Activated naive CD4-positive, alpha-beta T cell treated with anti-CD3 and anti-CD28 coated beads for 36 hours (primary cell): ENCODE measurements at regions of chr14 and their contacts with region 1.

Region 1: GRCh38 chr14:101876555-101876938 is 87.8 kb upstream of the DYNC1H1 start:
- DNase-seq: peak; percentile 94
- H3K4me3 Mint-ChIP-seq: peak overlapping the region; percentile 52
- H3K27ac Mint-ChIP-seq: peak overlapping the region; percentile 85
- H3K4me1 Mint-ChIP-seq: peaks cover 89% of the 10 kb centered on the region
- H3K27me3 Mint-ChIP-seq: no peaks in the 10 kb centered on the region

Region 2: DNA sequence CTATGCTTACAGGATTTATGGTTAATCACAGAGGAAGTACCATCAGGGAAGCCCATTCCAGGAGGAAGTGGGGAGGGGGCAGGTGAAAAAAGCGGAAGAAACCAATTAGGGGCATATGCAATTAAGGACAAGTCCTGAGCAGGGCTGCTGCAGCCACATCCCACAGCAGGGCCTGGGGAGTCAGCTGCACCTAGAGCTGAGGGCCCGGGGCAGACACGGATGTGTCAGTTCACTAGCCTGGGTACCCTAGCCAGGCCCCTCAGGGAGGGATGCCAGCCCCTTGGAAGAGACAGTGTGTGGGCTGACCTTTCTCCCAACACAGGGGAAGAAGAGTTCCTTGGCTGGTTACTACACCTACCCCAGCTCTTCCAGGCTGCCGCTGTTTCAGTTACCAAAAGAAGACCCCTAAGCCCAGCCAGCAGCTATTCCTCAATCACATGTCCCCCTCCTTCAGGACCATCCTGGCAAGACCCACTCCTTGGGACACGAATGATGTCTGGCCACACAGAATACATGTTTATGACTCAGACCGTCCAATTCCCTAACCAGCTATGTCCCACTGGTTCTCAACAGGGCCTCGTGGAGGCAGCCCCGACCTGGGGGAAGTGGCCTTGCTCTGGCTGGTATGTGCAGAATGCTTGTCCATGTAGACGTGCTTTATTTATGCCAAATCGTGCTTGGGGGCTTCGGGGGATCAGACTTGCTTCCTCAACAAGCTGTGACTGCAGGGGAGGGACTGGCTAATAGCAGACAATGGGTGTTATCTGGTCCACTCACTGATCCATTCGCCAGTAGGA is 839.3 kb before region 1 on chr14:
- CTCF ChIA-PET with region 1: no interaction called
- intact Hi-C with region 1: no loop called
- DNase-seq: no peak
- H3K4me3 Mint-ChIP-seq: no peak overlapping the region
- H3K27ac Mint-ChIP-seq: peak overlapping the region; percentile 51
- H3K4me1 Mint-ChIP-seq: no peaks in the 10 kb centered on the region
- H3K27me3 Mint-ChIP-seq: no peaks in the 10 kb centered on the region

Region 3: GRCh38 chr14:101135796-101136742 is 740.5 kb before region 1 on chr14:
- CTCF ChIA-PET with region 1: no interaction called
- intact Hi-C with region 1: no loop called
- DNase-seq: no peak
- H3K4me3 Mint-ChIP-seq: no peak overlapping the region
- H3K27ac Mint-ChIP-seq: no peak overlapping the region
- H3K4me1 Mint-ChIP-seq: no peaks in the 10 kb centered on the region
- H3K27me3 Mint-ChIP-seq: peaks cover 15% of the 10 kb centered on the region

Region 4: DNA sequence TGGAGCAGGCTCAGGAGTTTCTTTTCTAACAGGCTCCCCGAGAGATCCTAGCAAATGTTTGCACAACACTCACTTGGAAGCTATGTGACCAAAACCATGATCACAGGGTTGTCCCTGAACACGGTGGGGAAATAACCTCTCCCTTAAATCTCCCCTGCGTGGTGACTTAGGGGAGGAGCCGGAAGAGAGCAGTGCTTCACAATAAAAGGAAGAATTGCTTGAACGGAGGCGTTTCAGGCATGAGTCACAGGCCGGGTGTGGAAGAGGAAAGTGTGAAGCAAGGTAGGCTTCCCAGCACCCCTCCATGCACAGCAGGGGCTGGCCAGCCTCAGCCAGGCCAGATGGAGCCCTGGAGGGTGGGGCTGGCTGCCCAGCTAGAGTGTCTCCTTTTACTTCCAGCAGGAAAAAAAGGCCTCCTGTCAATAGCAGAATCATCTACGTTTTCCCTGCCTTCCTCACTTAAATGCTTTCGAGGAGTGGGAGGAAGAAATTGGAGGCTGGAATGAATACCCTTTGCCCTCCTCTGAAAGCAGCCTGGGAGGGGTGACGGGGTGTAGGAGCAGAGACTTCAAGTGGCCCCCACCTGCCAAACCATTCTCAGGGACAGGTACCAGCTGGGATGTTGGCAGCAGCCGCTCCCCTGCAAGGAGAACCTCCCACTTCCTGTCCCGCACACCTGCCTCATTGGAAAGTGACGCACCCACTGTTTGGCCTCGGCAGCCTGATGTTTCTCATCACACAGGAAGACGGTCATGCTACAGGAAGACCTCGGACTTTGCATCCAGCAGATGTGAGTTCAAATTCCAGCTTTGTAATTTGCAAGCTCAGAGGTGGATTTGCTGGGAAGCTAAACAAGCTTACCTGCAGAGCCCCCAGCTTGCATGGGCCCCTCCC is 145.1 kb before region 1 on chr14:
- CTCF ChIA-PET with region 1: no interaction called
- intact Hi-C with region 1: loop called (anchors 1 kb)
- DNase-seq: peak; percentile 96
- H3K4me3 Mint-ChIP-seq: peak overlapping the region; percentile 71
- H3K27ac Mint-ChIP-seq: peak overlapping the region; percentile 98
- H3K4me1 Mint-ChIP-seq: peaks cover 53% of the 10 kb centered on the region
- H3K27me3 Mint-ChIP-seq: no peaks in the 10 kb centered on the region

Region 5: DNA sequence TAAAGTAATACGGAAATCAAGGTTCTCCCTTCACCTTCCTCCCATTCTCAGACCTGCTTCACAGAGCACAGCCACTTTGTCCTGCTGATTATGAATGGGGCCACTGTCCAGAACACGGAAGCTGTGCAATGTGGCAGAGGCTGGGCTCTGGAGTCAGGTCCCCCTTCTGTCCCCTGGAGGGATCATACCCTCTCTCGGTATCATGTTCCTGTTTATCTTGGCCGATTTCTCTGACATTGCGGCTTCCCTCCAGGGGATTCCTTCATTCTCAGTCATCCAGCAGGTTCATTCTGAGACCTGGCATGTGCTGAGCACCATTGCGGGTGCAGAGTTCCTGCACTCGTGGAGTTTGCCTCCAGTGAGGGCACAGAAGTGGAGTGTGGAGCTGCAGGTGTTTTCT is 103.7 kb before region 1 on chr14:
- CTCF ChIA-PET with region 1: interaction called, 10 read pairs
- intact Hi-C with region 1: no loop called
- DNase-seq: no peak
- H3K4me3 Mint-ChIP-seq: no peak overlapping the region
- H3K27ac Mint-ChIP-seq: no peak overlapping the region
- H3K4me1 Mint-ChIP-seq: peaks cover 13% of the 10 kb centered on the region
- H3K27me3 Mint-ChIP-seq: no peaks in the 10 kb centered on the region

Region 6: DNA sequence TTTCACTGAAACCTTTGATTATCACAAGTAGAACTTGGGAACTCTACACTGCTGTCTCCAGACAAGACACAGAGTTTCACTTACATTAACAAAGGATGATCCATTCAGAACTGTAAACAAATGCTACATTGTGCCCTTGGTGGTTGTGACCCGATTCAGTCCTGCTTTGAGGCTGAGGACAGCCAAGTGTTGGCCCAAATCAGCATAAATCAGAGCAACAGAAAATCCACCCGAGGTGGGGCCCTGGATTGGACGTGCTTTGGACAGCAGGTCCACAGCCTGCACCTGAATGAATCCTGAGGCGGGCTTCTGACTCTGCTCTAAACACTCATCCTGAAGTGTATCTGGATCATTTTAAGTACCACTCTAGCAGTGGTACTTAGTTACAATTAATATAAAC is 46.3 kb before region 1 on chr14:
- CTCF ChIA-PET with region 1: no interaction called
- intact Hi-C with region 1: no loop called
- DNase-seq: no peak
- H3K4me3 Mint-ChIP-seq: no peak overlapping the region
- H3K27ac Mint-ChIP-seq: peak overlapping the region; percentile 80
- H3K4me1 Mint-ChIP-seq: peaks cover 90% of the 10 kb centered on the region
- H3K27me3 Mint-ChIP-seq: no peaks in the 10 kb centered on the region

Region 7: DNA sequence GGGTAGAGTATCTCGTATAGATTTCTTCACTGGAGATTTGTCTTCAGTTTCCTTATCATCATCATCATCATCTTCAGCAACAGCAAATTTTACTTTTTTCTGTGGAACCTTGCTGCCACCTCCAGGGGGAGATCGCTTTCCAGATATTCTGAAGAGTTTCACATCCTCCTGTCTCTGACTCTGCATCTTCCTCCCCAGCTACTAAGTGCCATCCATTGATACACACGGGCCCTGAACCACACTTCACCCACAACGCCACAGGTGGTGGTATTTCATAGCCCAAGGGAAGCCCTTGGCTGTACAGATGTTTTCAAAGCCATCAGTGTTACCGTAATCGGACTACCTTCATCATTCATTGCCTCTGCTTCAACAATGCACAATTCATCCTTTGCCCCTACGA is 32.9 kb before region 1 on chr14:
- CTCF ChIA-PET with region 1: interaction called, 16 read pairs
- intact Hi-C with region 1: loop called (anchors 1 kb)
- DNase-seq: peak; percentile 80
- H3K4me3 Mint-ChIP-seq: no peak overlapping the region
- H3K27ac Mint-ChIP-seq: peak overlapping the region; percentile 74
- H3K4me1 Mint-ChIP-seq: peaks cover 88% of the 10 kb centered on the region
- H3K27me3 Mint-ChIP-seq: no peaks in the 10 kb centered on the region

Region 8: GRCh38 chr14:101947906-101948665 is 71.5 kb after region 1 on chr14:
- CTCF ChIA-PET with region 1: no interaction called
- intact Hi-C with region 1: loop called (anchors 1 kb)
- DNase-seq: peak; percentile 100
- H3K4me3 Mint-ChIP-seq: peak overlapping the region; percentile 98
- H3K27ac Mint-ChIP-seq: peak overlapping the region; percentile 97
- H3K4me1 Mint-ChIP-seq: peaks cover 18% of the 10 kb centered on the region
- H3K27me3 Mint-ChIP-seq: peaks cover 20% of the 10 kb centered on the region

Region 9: DNA sequence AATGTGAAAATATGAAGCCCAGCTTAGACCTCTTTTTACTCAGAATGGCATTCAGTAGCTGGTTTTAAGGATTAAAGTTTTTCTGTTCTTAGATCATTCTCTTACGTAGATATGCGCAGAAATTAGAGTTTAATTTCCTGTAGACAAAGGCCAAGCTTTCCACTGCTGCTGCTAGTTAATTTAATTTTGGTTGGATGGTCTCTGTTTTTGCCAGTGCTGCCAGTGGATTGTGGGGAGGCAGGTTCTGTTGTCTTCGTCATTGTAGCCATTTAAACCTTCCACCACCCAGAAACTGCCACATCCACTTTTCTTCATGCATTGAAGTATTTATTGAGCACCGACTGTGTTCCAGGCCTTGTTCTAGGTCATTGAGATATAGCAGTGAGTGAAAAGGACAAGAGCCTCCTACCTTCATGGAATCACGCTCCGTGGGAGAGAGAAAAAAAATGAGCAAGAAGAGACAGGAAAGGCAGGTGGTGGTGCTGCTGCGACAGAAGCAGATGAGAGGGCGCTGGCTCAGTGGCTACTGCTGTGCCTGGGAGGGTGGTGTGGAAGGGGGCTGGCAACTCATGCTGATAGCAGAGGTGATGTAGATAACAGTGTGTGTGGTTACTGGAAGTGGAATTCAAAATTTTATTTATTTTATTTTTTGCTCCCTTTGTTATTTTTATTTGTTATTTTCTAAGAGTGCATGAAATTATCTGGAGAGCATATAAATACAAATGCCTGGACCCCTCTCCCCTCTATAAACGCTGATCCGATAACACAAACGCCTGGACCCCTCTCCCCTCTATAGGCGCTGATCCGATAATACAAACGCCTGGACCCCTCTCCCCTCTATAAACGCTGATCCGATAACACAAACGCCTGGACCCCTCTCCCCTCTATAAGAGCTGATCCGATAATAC is 121.1 kb after region 1 on chr14:
- CTCF ChIA-PET with region 1: no interaction called
- intact Hi-C with region 1: no loop called
- DNase-seq: no peak
- H3K4me3 Mint-ChIP-seq: no peak overlapping the region
- H3K27ac Mint-ChIP-seq: no peak overlapping the region
- H3K4me1 Mint-ChIP-seq: no peaks in the 10 kb centered on the region
- H3K27me3 Mint-ChIP-seq: no peaks in the 10 kb centered on the region

Region 10: DNA sequence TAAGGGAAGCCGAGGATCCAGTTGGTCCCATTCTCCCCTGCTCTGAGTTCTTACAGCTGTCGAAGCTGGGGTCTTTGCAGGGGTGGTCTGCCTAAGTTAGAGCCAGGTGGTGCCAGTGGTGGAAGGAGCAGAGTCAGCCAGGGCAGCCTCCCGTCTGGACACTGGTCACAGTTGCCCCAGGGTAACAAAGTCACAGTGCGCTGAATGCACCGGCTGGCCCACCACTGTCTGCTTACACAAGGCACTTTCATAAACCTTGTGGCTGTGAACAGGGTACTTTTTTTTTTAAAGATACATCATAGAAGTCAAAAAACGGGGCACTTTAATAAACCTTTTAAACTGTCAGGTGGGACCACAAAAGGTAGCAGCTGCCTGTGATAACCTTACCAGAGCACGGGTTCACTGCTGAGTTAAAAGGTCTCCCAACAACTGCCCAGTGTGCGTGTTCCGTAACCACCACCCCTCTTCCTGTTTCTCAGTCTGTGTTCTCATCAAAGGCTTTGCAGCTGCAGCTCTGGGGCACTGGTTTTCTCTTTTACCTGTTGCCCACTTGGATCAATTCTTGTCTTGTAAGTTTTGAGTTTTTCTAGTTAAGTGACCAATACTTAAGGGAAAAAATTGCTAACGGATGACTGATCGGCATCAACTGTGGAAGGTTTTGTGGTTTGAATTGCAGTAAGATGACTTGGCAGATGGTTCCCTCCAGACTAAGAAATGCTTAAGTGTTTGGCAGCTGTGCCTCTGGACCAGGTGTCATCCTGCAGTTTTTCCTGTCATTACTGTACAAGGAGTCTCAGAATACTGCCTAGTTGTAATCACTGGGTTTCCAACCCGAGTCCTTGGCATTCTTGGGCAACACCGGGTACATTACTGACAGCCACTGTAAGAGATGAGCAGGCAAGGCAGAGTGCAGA is 143.8 kb after region 1 on chr14:
- CTCF ChIA-PET with region 1: no interaction called
- intact Hi-C with region 1: loop called (anchors 1 kb)
- DNase-seq: peak; percentile 82
- H3K4me3 Mint-ChIP-seq: no peak overlapping the region
- H3K27ac Mint-ChIP-seq: peak overlapping the region; percentile 87
- H3K4me1 Mint-ChIP-seq: peaks cover 22% of the 10 kb centered on the region
- H3K27me3 Mint-ChIP-seq: no peaks in the 10 kb centered on the region